ENCODE measurements at regions of chr11 and their contacts with region 1.

Region 1: DNA sequence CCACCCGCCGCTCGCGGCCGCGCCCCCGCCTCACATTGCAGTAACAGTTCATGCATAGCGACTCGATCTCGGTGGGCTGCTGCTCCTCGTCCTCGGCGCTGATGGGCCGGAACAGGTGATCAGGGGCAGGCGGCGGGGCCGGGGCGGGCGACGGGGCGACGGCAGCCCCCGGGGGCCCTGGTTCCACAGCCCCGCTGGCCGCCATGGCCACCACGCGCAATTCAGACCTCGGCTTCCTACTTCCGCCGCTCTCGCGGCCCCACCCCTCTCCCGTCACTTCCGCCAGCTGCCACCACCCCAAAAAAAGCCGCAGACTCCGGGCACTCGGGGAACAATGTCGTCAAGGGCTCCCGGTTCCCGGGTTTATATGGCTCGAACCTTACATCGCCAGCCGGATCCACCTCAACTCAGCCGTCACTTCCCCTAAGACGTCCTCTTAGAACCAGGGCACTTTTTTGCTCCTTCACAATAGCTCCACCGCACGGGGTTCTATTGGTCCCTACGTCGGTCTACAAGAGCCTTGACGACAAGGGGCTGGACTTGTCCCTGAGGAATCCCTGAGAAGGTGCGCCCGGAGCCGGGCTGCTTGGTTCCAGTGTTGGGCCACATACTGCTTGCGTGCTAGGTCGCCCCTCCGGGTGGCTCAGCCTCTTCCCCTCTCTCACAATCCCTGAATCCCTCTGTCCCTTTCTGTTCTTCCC is at the start of gene ZPR1:
- DNase-seq: peak; percentile 92
- ATAC-seq: peak; percentile 93
- total RNA-seq, gene ZPR1: 15.9 TPM

Region 2: GRCh38 chr11:116742104-116742503 is 45.8 kb before region 1 on chr11:
- intact Hi-C with region 1: no loop called
- DNase-seq: no peak
- ATAC-seq: no peak

Region 3: GRCh38 chr11:117099696-117100095 is 311.8 kb after region 1 on chr11:
- intact Hi-C with region 1: loop called (anchors 2 kb)
- DNase-seq: no peak
- ATAC-seq: peak; percentile 2

Region 4: DNA sequence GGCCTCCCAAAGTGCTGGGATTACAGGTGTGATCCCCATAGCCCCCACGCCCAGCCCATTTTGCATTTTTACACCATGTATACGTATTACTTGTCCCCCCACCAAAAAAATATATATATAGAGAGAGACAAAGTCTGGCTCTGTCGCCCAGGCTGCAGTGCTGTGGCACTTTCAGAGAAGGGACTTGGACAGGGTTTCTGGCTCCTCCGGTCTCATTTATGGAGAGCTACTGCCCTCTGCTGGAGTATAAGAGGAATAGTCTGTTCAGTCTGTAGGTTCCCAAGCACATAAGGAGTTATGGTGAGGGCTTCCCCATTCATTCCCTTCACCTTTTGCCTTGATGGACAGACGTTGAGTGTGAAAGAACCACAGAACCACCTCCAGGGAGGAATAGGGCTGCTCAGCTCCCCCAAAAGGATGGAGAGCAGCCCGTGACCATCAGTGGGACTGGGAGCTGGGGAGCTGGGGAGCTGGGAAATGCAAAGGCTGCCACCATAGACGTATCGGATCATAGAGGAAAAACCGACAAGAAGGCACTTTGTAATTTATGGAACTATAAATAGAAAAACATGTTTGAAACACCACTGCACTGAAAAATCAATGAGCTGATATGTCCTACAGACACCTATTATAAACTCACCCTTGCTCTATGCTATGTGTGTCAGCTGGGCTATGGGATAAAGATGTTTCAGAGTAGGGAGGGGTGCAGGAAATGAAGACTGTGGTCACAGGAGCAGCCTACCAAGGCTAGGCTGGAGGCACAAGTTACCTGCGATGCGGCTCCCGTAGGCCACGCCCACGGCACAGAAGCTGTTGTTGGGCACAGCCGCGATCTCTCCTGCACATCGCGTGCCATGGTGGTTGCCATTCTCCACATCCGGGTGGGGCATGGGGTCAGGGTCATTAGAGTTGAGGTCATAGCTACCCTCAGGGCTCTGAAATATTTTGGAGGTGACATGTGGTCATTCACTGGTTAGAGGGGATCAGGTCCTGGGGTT is 438.8 kb after region 1 on chr11:
- intact Hi-C with region 1: loop called (anchors 10 kb)
- DNase-seq: no peak
- ATAC-seq: peak; percentile 76

Measured in Right ventricle myocardium superior (tissue), 1 donor.